B cell (primary cell): ENCODE measurements at regions of chr14 and their contacts with region 1.

Region 1: GRCh38 chr14:102524466-102525218 is 15.1 kb upstream of the ANKRD9 start:
- DNase-seq: peak; percentile 92
- ATAC-seq: peak; percentile 94
- H3K4me3 ChIP-seq: peak overlapping the region; percentile 35 to 71 (median 61)
- H3K4me3 Mint-ChIP-seq: peak overlapping the region; percentile 95
- H3K27ac ChIP-seq: peak overlapping the region; percentile 56 to 63
- H3K27ac Mint-ChIP-seq: peak overlapping the region; percentile 98
- H3K4me1 ChIP-seq: peaks cover 10 to 27% of the 10 kb centered on the region in 2 donors
- H3K4me1 Mint-ChIP-seq: peaks cover 27% of the 10 kb centered on the region
- H3K27me3 ChIP-seq: no peaks in the 10 kb centered on the region
- H3K27me3 Mint-ChIP-seq: no peaks in the 10 kb centered on the region
- CTCF ChIP-seq: peak; percentile 96

Region 2: DNA sequence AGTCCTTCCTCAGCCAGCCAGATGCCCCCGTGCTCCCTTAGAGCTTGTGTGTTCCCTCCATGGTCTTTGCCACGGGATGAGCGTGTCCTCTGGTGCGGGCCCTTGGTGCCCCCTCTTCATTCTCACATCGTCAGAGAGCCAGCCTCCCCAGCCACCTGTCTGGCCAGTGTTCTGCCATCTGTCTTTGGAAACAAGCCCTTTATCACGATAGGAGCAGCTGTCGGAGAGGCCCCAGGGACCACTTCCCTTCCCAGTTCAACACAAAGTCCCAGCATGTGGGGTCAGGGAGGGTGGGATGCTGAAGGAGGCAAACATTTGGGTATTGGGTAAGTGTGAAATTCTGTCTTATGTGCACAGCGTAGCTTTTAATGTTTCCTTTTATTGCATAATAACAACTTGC is 515.8 kb before region 1 on chr14:
- CTCF ChIA-PET with region 1: no interaction called
- POLR2A ChIA-PET with region 1: no interaction called
- intact Hi-C with region 1: no loop called
- DNase-seq: no peak
- ATAC-seq: no peak
- H3K4me3 ChIP-seq: no peak overlapping the region
- H3K4me3 Mint-ChIP-seq: no peak overlapping the region
- H3K27ac ChIP-seq: no peak overlapping the region
- H3K27ac Mint-ChIP-seq: no peak overlapping the region
- H3K4me1 ChIP-seq: no peaks in the 10 kb centered on the region
- H3K4me1 Mint-ChIP-seq: no peaks in the 10 kb centered on the region
- H3K27me3 ChIP-seq: no peaks in the 10 kb centered on the region
- H3K27me3 Mint-ChIP-seq: no peaks in the 10 kb centered on the region
- CTCF ChIP-seq: no peak

Region 3: GRCh38 chr14:102437997-102438915 is 86.4 kb before region 1 on chr14:
- CTCF ChIA-PET with region 1: interaction called, 118 read pairs
- POLR2A ChIA-PET with region 1: no interaction called
- intact Hi-C with region 1: no loop called
- DNase-seq: peak; percentile 80
- ATAC-seq: peak; percentile 58
- H3K4me3 ChIP-seq: no peak overlapping the region
- H3K4me3 Mint-ChIP-seq: peak overlapping the region; percentile 13
- H3K27ac ChIP-seq: no peak overlapping the region
- H3K27ac Mint-ChIP-seq: no peak overlapping the region
- H3K4me1 ChIP-seq: peaks cover 4 to 6% of the 10 kb centered on the region in 2 donors
- H3K4me1 Mint-ChIP-seq: peaks cover 3% of the 10 kb centered on the region
- H3K27me3 ChIP-seq: no peaks in the 10 kb centered on the region
- H3K27me3 Mint-ChIP-seq: no peaks in the 10 kb centered on the region
- CTCF ChIP-seq: peak; percentile 81

Region 4: GRCh38 chr14:102509744-102510615 is 14.7 kb before region 1 on chr14 and contains the start of gene ANKRD9:
- CTCF ChIA-PET with region 1: interaction called, 14 read pairs
- POLR2A ChIA-PET with region 1: no interaction called
- intact Hi-C with region 1: loop called (anchors 1 kb)
- DNase-seq: peak; percentile 86
- ATAC-seq: peak; percentile 84
- H3K4me3 ChIP-seq: peak within 1 kb of the TSS; percentile 17 to 76 (median 72)
- H3K4me3 Mint-ChIP-seq: peak within 1 kb of the TSS; percentile 90
- H3K27ac ChIP-seq: no peak within 1 kb of the TSS
- H3K27ac Mint-ChIP-seq: peak within 1 kb of the TSS; percentile 68
- H3K4me1 ChIP-seq: peaks cover 15 to 17% of the 10 kb centered on the region in 2 donors
- H3K4me1 Mint-ChIP-seq: peaks cover 12% of the 10 kb centered on the region
- H3K27me3 ChIP-seq: peaks cover 0 to 11% (median 0%) of the 10 kb centered on the region in 4 experiments
- H3K27me3 Mint-ChIP-seq: peaks cover 8% of the 10 kb centered on the region
- CTCF ChIP-seq: no peak
- total RNA-seq, gene ANKRD9: 1.4 and 1.8 TPM in 2 replicates

Region 5: GRCh38 chr14:102555264-102555831 is 30.7 kb after region 1 on chr14:
- CTCF ChIA-PET with region 1: interaction called, 7 read pairs
- POLR2A ChIA-PET with region 1: no interaction called
- intact Hi-C with region 1: loop called (anchors 2 kb)
- DNase-seq: peak; percentile 76
- ATAC-seq: peak; percentile 88
- H3K4me3 ChIP-seq: peak overlapping the region in 4 of 5 experiments; percentile 65 to 84 (median 74)
- H3K4me3 Mint-ChIP-seq: peak overlapping the region; percentile 82
- H3K27ac ChIP-seq: peak overlapping the region; percentile 80 to 86
- H3K27ac Mint-ChIP-seq: peak overlapping the region; percentile 72
- H3K4me1 ChIP-seq: peaks cover 9 to 22% of the 10 kb centered on the region in 2 donors
- H3K4me1 Mint-ChIP-seq: peaks cover 7% of the 10 kb centered on the region
- H3K27me3 ChIP-seq: peaks cover 0 to 3% (median 0%) of the 10 kb centered on the region in 4 experiments
- H3K27me3 Mint-ChIP-seq: peaks cover under 1% of the 10 kb centered on the region
- CTCF ChIP-seq: no peak

Region 6: GRCh38 chr14:102917469-102918211 is 393.0 kb after region 1 on chr14:
- CTCF ChIA-PET with region 1: no interaction called
- POLR2A ChIA-PET with region 1: no interaction called
- intact Hi-C with region 1: loop called (anchors 1 kb)
- DNase-seq: peak; percentile 79
- ATAC-seq: peak; percentile 28
- H3K4me3 ChIP-seq: peak overlapping the region in 1 of 5 experiments; percentile 16
- H3K4me3 Mint-ChIP-seq: peak overlapping the region; percentile 33
- H3K27ac ChIP-seq: peak overlapping the region; percentile 55 to 68
- H3K27ac Mint-ChIP-seq: peak overlapping the region; percentile 80
- H3K4me1 ChIP-seq: peaks cover 54 to 58% of the 10 kb centered on the region in 2 donors
- H3K4me1 Mint-ChIP-seq: peaks cover 48% of the 10 kb centered on the region
- H3K27me3 ChIP-seq: peaks cover 0 to 4% (median under 1%) of the 10 kb centered on the region in 4 experiments
- H3K27me3 Mint-ChIP-seq: no peaks in the 10 kb centered on the region
- CTCF ChIP-seq: peak; percentile 73